SK-N-SH (cell line): ENCODE measurements at regions of chr2 and their contacts with region 1.

Region 1: GRCh38 chr2:54665436-54665856 is 58.0 kb upstream of the EML6 start:
- DNase-seq: peak; percentile 48
- H3K4me3 ChIP-seq: no peak overlapping the region; a peak in 1 of 4 replicates
- H3K27ac ChIP-seq: peak overlapping the region; percentile 34 to 73; a peak in 3 of 4 replicates
- H3K4me1 ChIP-seq: peaks cover 2 to 31% of the 10 kb centered on the region in 2 experiments; a peak in 3 of 4 replicates
- H3K27me3 ChIP-seq: no peaks in the 10 kb centered on the region
- CTCF ChIP-seq: peak; percentile 71
- EP300 ChIP-seq: no peak
- RAD21 ChIP-seq: peak; percentile 53

Region 2: GRCh38 chr2:54387059-54387991 is 278.1 kb before region 1 on chr2:
- CTCF ChIA-PET with region 1: no interaction called
- POLR2A ChIA-PET with region 1: no interaction called
- DNase-seq: no peak
- H3K4me3 ChIP-seq: no peak overlapping the region
- H3K27ac ChIP-seq: no peak overlapping the region
- H3K4me1 ChIP-seq: no peaks in the 10 kb centered on the region; a peak in 1 of 4 replicates
- H3K27me3 ChIP-seq: no peaks in the 10 kb centered on the region
- CTCF ChIP-seq: no peak; the same call in 1 of the 2 replicates
- EP300 ChIP-seq: no peak
- RAD21 ChIP-seq: no peak

Region 3: GRCh38 chr2:54675738-54676137 is 10.3 kb after region 1 on chr2:
- CTCF ChIA-PET with region 1: interaction called, 17 read pairs
- POLR2A ChIA-PET with region 1: no interaction called
- DNase-seq: no peak
- H3K4me3 ChIP-seq: no peak overlapping the region
- H3K27ac ChIP-seq: no peak overlapping the region
- H3K4me1 ChIP-seq: peaks cover 4 to 7% of the 10 kb centered on the region in 2 experiments; a peak in 1 of 4 replicates
- H3K27me3 ChIP-seq: no peaks in the 10 kb centered on the region
- CTCF ChIP-seq: no peak
- EP300 ChIP-seq: no peak
- RAD21 ChIP-seq: no peak

Region 4: GRCh38 chr2:54773838-54774237 is 108.4 kb after region 1 on chr2:
- CTCF ChIA-PET with region 1: no interaction called
- POLR2A ChIA-PET with region 1: no interaction called
- DNase-seq: no peak
- H3K4me3 ChIP-seq: no peak overlapping the region
- H3K27ac ChIP-seq: peak overlapping the region in 1 of 2 experiments; percentile 67; a peak in 1 of 4 replicates
- H3K4me1 ChIP-seq: peaks cover 0 to 30% of the 10 kb centered on the region in 2 experiments; a peak in 3 of 4 replicates
- H3K27me3 ChIP-seq: no peaks in the 10 kb centered on the region
- CTCF ChIP-seq: peak; percentile 37
- EP300 ChIP-seq: no peak
- RAD21 ChIP-seq: no peak